Activated CD4-positive, alpha-beta memory T cell treated with anti-CD3 and anti-CD28 coated beads for 36 hours (primary cell): ENCODE measurements at regions of chr5 and their contacts with region 1.

Region 1: GRCh38 chr5:56900858-56901578 is 8.4 kb upstream of the SETD9 start:
- DNase-seq: peak; percentile 24
- H3K4me3 Mint-ChIP-seq: no peak overlapping the region
- H3K27ac Mint-ChIP-seq: no peak overlapping the region
- H3K4me1 Mint-ChIP-seq: peaks cover 5% of the 10 kb centered on the region
- H3K27me3 Mint-ChIP-seq: no peaks in the 10 kb centered on the region

Region 2: DNA sequence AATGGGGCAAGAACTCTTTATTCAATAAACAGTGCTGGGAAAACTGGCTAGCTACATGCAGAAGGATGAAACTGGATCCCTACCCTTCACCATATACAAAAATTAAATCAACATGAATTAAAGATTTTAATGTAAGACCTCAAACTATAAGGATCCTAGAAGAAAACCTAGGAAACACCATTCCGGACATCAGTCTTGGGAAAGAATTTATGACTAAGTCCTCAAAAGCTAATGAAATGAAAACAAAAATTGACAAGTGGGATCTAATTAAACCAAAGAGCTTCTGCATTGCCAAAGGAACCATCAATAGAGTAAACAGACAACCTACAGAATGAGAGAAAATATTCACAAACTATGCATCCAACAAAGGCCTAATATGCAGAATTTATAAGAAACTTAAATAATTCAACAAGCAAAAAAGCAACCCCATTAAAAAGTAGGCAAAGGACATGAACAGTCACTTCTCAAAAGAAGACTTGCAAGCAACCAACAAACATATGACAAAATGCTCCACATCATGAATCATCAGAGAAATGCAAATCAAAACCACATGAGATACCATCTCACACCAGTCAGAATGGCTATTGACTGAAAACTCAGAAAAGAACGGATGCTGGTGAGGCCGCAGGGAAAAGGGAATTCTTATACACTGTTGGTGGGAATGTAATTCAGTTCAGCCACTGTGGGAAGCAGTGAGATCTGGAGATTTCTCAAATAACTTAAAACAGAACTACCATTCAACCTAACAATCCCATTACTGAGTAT is 190.0 kb before region 1 on chr5:
- CTCF ChIA-PET with region 1: no interaction called
- POLR2A ChIA-PET with region 1: no interaction called
- intact Hi-C with region 1: no loop called
- DNase-seq: peak; percentile 40
- H3K4me3 Mint-ChIP-seq: no peak overlapping the region
- H3K27ac Mint-ChIP-seq: peak overlapping the region; percentile 11
- H3K4me1 Mint-ChIP-seq: peaks cover 26% of the 10 kb centered on the region
- H3K27me3 Mint-ChIP-seq: no peaks in the 10 kb centered on the region

Region 3: DNA sequence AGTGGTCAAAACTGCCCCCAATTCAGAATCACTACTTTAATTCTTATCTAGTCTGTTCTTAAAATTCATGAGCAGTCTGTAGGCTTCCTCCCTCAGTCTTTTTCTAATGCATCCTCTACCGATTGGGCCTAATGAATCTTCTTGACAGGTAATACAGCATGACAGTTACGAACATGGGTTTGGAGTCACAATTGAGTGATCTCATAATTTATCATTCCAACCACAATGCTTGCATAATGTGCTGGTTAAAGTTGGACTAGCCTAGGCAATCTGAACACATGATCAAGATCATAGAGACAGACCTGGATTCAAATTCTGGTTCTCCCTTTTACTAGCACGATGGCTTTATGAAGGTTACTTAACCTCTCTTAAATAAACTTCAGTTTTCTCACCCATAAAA is 24.7 kb before region 1 on chr5:
- CTCF ChIA-PET with region 1: interaction called, 13 read pairs
- POLR2A ChIA-PET with region 1: no interaction called
- intact Hi-C with region 1: no loop called
- DNase-seq: no peak
- H3K4me3 Mint-ChIP-seq: no peak overlapping the region
- H3K27ac Mint-ChIP-seq: no peak overlapping the region
- H3K4me1 Mint-ChIP-seq: peaks cover 27% of the 10 kb centered on the region
- H3K27me3 Mint-ChIP-seq: no peaks in the 10 kb centered on the region

Region 4: DNA sequence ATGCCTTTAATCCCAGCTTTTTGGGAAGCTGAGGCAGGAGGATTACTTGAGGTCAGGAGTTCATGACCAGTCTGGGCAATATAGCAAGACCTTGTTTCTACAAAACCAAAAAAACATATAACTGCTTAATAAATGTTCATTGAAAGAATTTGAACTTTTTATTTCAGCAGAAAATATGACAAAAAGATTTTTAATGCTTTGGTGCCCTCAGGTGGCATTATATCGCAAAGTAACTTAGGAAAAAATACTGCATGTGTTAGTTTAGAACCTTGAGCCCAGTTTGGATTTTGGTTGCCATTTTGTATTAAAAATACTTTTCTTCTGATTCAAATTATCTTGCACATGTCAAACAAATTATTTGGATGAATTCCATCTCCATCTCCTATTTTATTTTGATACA is 376.1 kb after region 1 on chr5:
- CTCF ChIA-PET with region 1: no interaction called
- POLR2A ChIA-PET with region 1: no interaction called
- intact Hi-C with region 1: loop called (anchors 1 kb)
- DNase-seq: no peak
- H3K4me3 Mint-ChIP-seq: no peak overlapping the region
- H3K27ac Mint-ChIP-seq: no peak overlapping the region
- H3K4me1 Mint-ChIP-seq: no peaks in the 10 kb centered on the region
- H3K27me3 Mint-ChIP-seq: peaks cover 5% of the 10 kb centered on the region